H1 (cell line): ENCODE measurements at regions of chr18 and their contacts with region 1.

Region 1: DNA sequence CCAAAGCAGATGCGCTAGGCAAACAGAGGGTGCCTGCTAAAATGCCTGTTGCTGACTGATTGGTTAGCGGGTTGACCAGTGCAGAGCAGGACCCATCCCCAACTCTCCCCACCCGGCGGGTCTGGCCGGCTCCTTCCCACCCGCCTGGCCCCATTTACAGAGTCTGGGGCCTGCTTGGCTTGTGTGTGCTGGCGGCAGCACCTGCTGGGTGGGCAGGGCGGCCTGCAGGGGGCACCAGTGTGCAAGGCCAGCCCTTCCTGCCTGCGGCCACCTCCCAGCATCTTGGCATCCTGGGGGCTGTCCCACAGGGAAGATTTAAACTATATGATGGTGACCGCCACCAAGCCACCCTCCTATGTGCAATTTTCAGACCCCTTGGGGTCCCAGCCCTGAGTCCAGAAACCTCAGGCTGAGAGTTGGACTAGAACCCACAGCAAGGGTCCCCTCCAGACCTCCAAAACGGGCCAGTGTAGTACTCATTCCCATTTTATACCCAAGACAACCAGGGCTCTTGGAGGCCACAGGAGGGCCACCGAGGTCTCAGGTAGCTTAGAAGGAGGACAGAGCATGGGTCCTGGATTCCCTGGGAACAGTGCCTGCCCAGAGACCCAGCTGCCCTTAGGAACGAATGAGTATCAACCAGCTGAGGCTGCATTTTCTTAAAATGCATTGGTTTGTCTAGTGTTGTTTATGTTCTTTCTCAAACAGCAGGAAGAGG is 173.6 kb downstream of the SMAD7 start:
- DNase-seq: peak; percentile 41 to 87
- H3K4me3 ChIP-seq: no peak overlapping the region
- H3K27ac ChIP-seq: no peak overlapping the region
- H3K4me1 ChIP-seq: peaks cover 0 to 5% (median 2%) of the 10 kb centered on the region in 4 experiments; a peak in 4 of 7 replicates
- H3K27me3 ChIP-seq: no peaks in the 10 kb centered on the region
- CTCF ChIP-seq: peak; percentile 87 to 98 (median 90)
- EP300 ChIP-seq: no peak
- POLR2A ChIP-seq: no peak
- RAD21 ChIP-seq: peak; percentile 88 to 92

Region 2: GRCh38 chr18:48667276-48668254 is 109.6 kb before region 1 on chr18:
- CTCF ChIA-PET with region 1: no interaction called
- POLR2A ChIA-PET with region 1: no interaction called
- DNase-seq: no peak
- H3K4me3 ChIP-seq: no peak overlapping the region
- H3K27ac ChIP-seq: no peak overlapping the region
- H3K4me1 ChIP-seq: peaks cover 0 to 3% (median 0%) of the 10 kb centered on the region in 4 experiments; a peak in 2 of 7 replicates
- H3K27me3 ChIP-seq: no peaks in the 10 kb centered on the region
- CTCF ChIP-seq: peak; percentile 59 to 72 (median 67)
- EP300 ChIP-seq: no peak
- POLR2A ChIP-seq: no peak
- RAD21 ChIP-seq: peak; percentile 59 to 71

Region 3: DNA sequence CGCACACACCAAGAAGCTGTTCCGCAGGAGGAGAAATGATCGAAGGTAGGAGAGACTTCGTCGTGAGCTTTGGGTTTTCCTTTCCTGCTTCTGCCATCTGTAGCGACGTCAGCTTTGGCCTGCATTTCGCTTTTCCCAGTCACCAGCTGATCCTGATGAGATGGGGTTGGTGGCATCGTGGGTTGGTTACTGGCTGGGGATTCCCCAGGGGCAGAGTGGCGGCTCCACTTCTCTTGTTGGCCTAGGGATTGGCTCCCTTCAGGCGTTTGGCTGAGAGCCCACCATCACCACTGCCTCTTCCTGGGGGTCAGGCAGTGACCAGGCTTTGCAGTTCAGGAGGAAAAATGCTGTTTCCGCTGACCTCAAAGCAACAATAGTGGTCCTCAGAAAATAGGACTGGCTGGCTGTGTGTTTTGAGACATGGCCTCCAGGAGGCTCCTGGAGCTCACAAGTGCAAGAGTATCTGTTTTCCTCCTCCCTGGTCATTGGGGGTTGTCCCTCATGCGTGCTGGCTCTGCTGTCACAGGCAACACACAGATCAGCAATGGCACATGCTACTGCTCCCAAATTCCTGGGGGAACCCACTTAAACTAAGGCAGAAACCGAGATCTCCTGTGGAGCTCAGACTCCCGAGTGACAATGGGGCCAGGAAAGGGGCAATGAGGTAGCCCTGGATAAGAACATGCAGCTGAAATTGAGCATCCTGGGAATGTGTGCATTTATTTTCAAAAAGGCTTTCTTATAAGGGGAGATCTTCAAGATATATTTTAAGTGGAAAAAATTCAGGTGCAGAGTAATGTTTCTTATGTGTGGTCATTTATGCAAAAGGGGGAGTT is 65.3 kb before region 1 on chr18:
- CTCF ChIA-PET with region 1: interaction called, 15 read pairs
- POLR2A ChIA-PET with region 1: no interaction called
- DNase-seq: no peak
- H3K4me3 ChIP-seq: no peak overlapping the region
- H3K27ac ChIP-seq: no peak overlapping the region
- H3K4me1 ChIP-seq: peaks cover 0 to 10% (median 5%) of the 10 kb centered on the region in 4 experiments; a peak in 3 of 7 replicates
- H3K27me3 ChIP-seq: no peaks in the 10 kb centered on the region
- CTCF ChIP-seq: peak; percentile 39 to 78 (median 58)
- EP300 ChIP-seq: no peak
- POLR2A ChIP-seq: no peak
- RAD21 ChIP-seq: peak; percentile 86 to 87

Region 4: DNA sequence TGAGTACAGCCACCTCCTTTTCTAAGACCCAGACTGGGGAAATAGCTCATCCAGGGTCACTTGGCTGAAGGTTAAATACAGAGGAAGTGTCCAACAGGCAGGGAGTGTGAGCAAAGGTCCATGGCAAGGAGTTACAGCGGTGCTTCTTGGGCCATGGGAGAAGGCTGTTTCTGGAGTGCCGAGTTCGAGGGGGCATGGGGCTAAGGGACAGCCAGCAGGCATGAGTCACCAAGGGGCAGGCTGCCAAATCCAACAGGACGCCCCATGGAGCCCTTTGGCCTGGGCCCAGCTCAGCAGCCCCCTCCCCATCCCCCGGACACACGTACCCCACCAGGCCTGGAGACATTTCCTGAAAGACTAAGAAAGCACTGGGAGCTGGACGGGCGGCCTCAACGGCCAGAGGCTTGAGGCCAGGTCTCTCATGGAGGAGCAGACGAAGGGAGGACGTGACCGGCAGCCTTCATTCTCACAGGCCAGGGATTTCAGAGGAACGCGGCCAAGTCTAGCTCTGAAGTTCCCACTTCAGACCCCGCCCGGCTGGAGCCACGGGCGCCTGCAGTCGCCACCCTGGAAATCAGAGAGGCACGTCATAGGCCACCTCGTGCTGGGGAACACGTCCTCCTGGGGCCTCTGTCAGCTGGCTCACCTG is 13.2 kb after region 1 on chr18:
- CTCF ChIA-PET with region 1: interaction called, 16 read pairs
- POLR2A ChIA-PET with region 1: interaction called, 3 read pairs
- DNase-seq: no peak
- H3K4me3 ChIP-seq: no peak overlapping the region
- H3K27ac ChIP-seq: no peak overlapping the region
- H3K4me1 ChIP-seq: no peaks in the 10 kb centered on the region; a peak in 1 of 7 replicates
- H3K27me3 ChIP-seq: no peaks in the 10 kb centered on the region
- CTCF ChIP-seq: no peak
- EP300 ChIP-seq: no peak
- POLR2A ChIP-seq: no peak
- RAD21 ChIP-seq: no peak

Region 5: GRCh38 chr18:48827291-48828193 is 50.4 kb after region 1 on chr18:
- CTCF ChIA-PET with region 1: interaction called, 28 read pairs
- POLR2A ChIA-PET with region 1: no interaction called
- DNase-seq: peak in 1 of 2 experiments; percentile 62
- H3K4me3 ChIP-seq: peak overlapping the region in 2 of 4 experiments; percentile 18 to 46; a peak in 3 of 8 replicates
- H3K27ac ChIP-seq: no peak overlapping the region
- H3K4me1 ChIP-seq: peaks cover 11 to 30% (median 21%) of the 10 kb centered on the region in 4 experiments
- H3K27me3 ChIP-seq: no peaks in the 10 kb centered on the region
- CTCF ChIP-seq: no peak
- EP300 ChIP-seq: no peak
- POLR2A ChIP-seq: no peak
- RAD21 ChIP-seq: peak in 1 of 2 experiments; percentile 5; a peak in 1 of 4 replicates

Region 6: GRCh38 chr18:48848641-48849159 is 71.5 kb after region 1 on chr18:
- CTCF ChIA-PET with region 1: no interaction called
- POLR2A ChIA-PET with region 1: no interaction called
- DNase-seq: no peak
- H3K4me3 ChIP-seq: no peak overlapping the region
- H3K27ac ChIP-seq: no peak overlapping the region
- H3K4me1 ChIP-seq: peaks cover 0 to 20% (median 10%) of the 10 kb centered on the region in 4 experiments; a peak in 6 of 7 replicates
- H3K27me3 ChIP-seq: no peaks in the 10 kb centered on the region
- CTCF ChIP-seq: no peak
- EP300 ChIP-seq: no peak
- POLR2A ChIP-seq: no peak
- RAD21 ChIP-seq: no peak

Region 7: DNA sequence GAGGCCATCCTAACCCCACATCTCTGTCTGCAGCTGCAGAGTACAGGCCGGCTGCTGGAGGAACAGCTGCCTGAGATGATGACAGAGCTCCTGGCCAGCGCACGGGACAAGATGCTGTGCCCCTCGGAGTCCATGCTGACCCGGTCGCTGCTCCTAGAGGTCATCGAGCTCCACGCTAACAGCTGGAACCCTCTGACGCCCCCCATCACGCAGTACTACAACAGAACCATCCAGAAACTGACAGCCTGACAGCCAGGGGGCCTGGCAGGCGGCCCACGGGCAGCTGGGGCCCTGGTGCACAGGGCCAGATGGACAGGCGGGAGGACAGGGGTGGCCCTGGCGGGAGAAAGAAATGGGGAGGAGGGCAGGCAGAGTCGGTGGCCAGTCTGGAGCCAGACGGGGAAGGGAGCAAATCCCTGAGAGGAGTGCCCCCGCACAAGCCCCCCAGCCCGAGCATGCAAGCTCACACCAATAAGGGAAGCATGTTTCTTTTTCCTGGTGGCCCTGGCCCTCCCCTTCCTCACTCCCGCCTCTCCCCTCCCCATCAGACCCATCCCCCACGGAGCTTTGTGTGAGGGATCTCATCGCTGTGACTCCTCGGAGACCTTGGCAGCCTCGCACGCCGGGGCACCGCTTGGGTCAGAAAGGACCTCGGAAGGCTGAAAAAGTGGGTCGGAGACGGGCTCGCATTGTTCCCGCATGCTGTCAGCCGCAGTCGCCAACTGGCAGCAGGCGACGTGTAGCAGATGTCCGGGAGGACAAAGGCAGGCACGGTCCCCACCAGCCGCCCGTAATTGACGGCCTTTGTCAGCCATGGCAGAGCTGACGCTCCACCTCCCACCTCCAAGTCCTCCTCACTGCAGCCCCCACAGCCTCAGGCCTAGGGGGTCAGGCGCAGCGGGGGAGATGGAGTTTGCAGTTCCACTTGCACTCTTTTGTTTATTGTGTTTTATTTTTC is 82.4 kb after region 1 on chr18:
- CTCF ChIA-PET with region 1: interaction called, 12 read pairs
- POLR2A ChIA-PET with region 1: no interaction called
- DNase-seq: peak in 1 of 2 experiments; percentile 66
- H3K4me3 ChIP-seq: peak overlapping the region in 1 of 4 experiments; percentile 15; a peak in 1 of 8 replicates
- H3K27ac ChIP-seq: no peak overlapping the region
- H3K4me1 ChIP-seq: peaks cover 0 to 29% (median 22%) of the 10 kb centered on the region in 4 experiments; a peak in 6 of 7 replicates
- H3K27me3 ChIP-seq: no peaks in the 10 kb centered on the region
- CTCF ChIP-seq: no peak
- EP300 ChIP-seq: no peak
- POLR2A ChIP-seq: no peak
- RAD21 ChIP-seq: no peak